Common myeloid progenitor, CD34-positive (primary cell): ENCODE measurements at regions of chr20 and their contacts with region 1.

Region 1: DNA sequence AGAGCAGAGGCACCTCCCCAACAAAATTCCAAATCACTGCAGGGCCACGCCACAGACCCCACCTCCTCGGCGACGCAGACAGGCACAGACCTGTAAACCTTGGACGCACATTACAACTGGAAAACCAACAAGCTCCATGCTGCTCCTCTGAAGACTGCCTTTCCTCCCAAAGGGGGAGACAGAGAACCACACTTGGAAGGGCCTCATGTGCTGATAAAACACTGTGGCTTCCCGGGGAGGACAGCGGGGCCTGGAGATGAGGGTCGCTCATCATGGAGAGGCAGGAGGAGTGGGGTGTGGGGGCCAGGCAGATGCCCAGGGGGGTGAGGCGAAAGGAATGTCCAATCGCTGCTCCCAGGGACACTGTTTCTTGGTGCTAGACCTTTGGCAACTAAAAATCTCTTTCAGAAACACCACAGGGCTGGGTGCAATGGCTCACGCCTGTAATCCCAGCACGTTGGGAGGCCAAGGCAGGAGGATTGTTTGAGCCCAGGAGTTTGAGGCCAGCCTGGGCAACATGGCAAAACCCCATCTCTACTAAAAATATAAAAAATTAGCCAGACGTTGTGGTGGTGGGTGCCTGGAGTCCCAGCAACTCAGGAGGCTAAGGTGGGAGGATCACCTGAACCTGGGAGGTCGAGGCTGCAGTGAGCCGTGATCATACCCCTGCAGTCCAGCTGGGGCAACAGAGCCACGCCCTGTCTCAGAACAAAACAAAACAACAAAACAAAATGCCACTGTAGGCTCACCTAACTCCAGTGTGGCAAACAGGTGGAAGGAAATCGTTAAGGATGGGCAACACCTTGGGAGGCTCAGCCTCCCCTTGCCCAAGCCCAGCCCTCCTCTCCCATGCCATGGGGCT is 53.8 kb downstream of the ABHD12 start:
- DNase-seq: peak; percentile 47 to 60 (median 49)
- H3K4me3 ChIP-seq: no peak overlapping the region
- H3K27ac ChIP-seq: no peak overlapping the region
- H3K4me1 ChIP-seq: no peaks in the 10 kb centered on the region
- H3K27me3 ChIP-seq: no peaks in the 10 kb centered on the region

Region 2: GRCh38 chr20:25299806-25300205 is 37.0 kb before region 1 on chr20:
- CTCF ChIA-PET with region 1: no interaction called
- POLR2A ChIA-PET with region 1: no interaction called
- DNase-seq: no peak
- H3K4me3 ChIP-seq: no peak overlapping the region
- H3K27ac ChIP-seq: no peak overlapping the region
- H3K4me1 ChIP-seq: peaks cover 0 to 1% (median 0%) of the 10 kb centered on the region in 4 experiments
- H3K27me3 ChIP-seq: no peaks in the 10 kb centered on the region

Region 3: GRCh38 chr20:25399037-25399430 is 62.2 kb after region 1 on chr20:
- CTCF ChIA-PET with region 1: interaction called, 57 read pairs
- POLR2A ChIA-PET with region 1: no interaction called
- DNase-seq: peak; percentile 59 to 74 (median 67)
- H3K4me3 ChIP-seq: no peak overlapping the region
- H3K27ac ChIP-seq: no peak overlapping the region
- H3K4me1 ChIP-seq: no peaks in the 10 kb centered on the region
- H3K27me3 ChIP-seq: no peaks in the 10 kb centered on the region